ENCODE measurements at regions of chr11 and their contacts with region 1.

Region 1: DNA sequence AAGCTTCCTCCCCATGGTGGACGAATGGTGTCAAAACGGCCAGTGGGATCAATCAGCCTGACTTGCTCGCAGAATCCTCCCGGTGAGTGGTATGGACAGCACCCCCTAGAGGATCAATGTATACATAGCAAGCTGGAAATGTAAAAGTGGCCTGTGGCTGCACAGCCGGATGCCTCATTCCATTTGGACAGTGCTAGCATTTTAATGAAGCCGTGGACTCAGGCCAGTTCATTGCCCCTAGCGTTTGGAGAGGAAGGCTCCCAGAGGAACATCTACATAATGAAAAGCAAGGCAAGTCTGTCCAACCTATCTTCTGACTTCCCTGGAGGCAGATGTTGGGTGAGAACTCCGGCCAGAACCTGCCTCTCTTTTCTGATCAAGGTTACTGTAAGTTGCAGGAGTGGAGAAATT is 942.3 kb downstream of the NTM start:
- DNase-seq: peak; percentile 22
- ATAC-seq: no peak
- H3K4me3 ChIP-seq: no peak overlapping the region
- H3K27ac ChIP-seq: no peak overlapping the region
- H3K4me1 ChIP-seq: no peaks in the 10 kb centered on the region
- H3K27me3 ChIP-seq: no peaks in the 10 kb centered on the region
- CTCF ChIP-seq: peak; percentile 65

Region 2: DNA sequence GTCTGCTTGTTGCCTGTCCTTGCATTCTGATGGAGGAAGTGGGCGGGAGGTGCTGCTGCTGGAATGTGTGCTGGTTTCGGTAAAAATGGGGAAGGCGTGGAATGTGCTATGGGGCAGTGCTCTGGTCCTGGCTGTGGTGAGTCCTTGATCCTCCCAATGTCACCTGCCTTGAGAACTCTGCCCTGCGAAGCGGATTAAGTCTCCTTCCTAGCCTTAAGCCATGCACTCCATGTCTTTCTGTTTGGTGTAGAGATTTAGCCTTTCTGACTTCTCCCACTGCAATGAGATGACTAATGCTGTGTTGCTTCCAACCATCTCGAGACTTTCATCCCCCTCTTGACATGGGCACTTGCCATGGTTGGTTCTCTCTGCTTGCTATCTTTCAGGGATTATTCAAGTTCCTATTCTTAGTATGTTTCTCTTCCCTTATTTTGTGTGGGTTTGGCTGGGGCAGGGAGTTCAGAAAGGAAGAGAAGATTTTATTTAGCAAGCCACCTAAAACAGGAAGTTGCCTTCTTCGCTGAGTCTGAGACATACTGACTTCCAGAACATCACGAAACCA is 254.4 kb before region 1 on chr11:
- CTCF ChIA-PET with region 1: no interaction called
- POLR2A ChIA-PET with region 1: no interaction called
- in situ Hi-C with region 1: no loop called
- intact Hi-C with region 1: no loop called
- DNase-seq: no peak
- ATAC-seq: no peak
- H3K4me3 ChIP-seq: no peak overlapping the region
- H3K27ac ChIP-seq: no peak overlapping the region
- H3K4me1 ChIP-seq: no peaks in the 10 kb centered on the region
- H3K27me3 ChIP-seq: no peaks in the 10 kb centered on the region
- CTCF ChIP-seq: no peak

Region 3: GRCh38 chr11:132330515-132330914 is 17.8 kb after region 1 on chr11:
- CTCF ChIA-PET with region 1: no interaction called
- POLR2A ChIA-PET with region 1: interaction called, 25 read pairs
- in situ Hi-C with region 1: no loop called
- intact Hi-C with region 1: no loop called
- DNase-seq: no peak
- ATAC-seq: no peak
- H3K4me3 ChIP-seq: no peak overlapping the region
- H3K27ac ChIP-seq: no peak overlapping the region
- H3K4me1 ChIP-seq: no peaks in the 10 kb centered on the region
- H3K27me3 ChIP-seq: no peaks in the 10 kb centered on the region
- CTCF ChIP-seq: no peak

Measured in Panc1 (cell line).